Dorsolateral prefrontal cortex (tissue), 120 donors: ENCODE measurements at regions of chr3 and their contacts with region 1.

Region 1: DNA sequence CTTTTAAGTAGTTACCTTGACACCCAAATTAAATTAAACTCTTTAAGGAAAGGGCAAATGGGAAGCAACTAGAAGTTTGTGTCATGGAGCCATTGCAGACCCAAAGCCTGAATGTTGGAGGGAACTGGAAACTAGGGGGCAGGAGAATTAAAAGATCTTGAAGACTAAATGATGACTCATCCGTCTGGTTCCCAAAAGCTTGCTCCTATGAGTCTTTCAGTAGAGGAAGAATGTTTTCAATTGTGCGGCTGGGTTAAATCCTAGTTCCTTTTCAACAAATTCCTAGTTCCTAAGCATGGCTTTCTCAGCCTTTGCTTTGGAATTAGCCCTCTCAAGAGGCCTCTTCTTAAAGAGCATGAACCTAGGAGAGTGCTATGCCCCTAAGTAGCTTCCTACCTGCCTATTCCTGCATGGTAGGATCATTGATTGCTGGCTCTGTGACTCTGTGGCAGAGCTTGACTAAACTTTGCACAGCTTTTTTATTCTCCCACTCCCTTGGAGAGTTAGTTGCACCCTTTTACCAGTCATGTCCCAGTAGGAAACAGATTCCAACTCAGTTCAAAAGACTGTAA is 17.7 kb downstream of the CLEC3B start:
- DNase-seq: no peak
- H3K4me3 ChIP-seq: no peak overlapping the region
- H3K27ac ChIP-seq: no peak overlapping the region
- H3K27me3 ChIP-seq: peaks cover 0 to 5% (median 0%) of the 10 kb centered on the region in 45 donors
- CTCF ChIP-seq: peak in 11 of 56 donors; percentile 10 to 35 (median 17)

Region 2: GRCh38 chr3:44576613-44577012 is 467.2 kb before region 1 on chr3:
- intact Hi-C with region 1: no loop called
- DNase-seq: no peak
- H3K4me3 ChIP-seq: no peak overlapping the region
- H3K27ac ChIP-seq: no peak overlapping the region
- H3K27me3 ChIP-seq: no peaks in the 10 kb centered on the region
- CTCF ChIP-seq: no peak

Region 3: DNA sequence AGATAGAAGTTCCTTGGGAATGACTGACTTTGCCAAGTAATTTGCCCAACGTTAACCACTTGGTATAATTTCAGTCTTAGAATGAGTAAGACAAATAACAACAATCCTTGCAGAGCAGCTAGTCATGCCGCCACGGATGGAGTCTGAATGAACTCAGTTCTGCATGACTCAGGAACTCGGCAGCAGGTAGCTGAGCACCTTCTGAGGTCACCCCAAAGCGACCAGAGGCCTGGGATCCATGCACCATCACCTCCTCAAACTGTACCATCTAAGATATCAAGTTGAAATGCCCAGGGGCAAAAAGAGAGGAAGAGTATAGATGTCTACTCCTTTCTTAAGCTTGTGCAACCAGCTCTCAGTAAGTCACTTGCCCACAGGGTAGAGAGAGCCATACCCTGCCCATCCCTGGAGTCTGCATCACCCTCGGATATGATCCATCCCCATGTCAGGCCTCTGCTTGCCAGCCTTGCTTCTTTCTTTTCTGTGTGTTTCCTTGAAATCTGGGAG is 110.9 kb after region 1 on chr3:
- intact Hi-C with region 1: no loop called
- DNase-seq: no peak
- H3K4me3 ChIP-seq: no peak overlapping the region
- H3K27ac ChIP-seq: no peak overlapping the region
- H3K27me3 ChIP-seq: no peaks in the 10 kb centered on the region
- CTCF ChIP-seq: no peak

Region 4: DNA sequence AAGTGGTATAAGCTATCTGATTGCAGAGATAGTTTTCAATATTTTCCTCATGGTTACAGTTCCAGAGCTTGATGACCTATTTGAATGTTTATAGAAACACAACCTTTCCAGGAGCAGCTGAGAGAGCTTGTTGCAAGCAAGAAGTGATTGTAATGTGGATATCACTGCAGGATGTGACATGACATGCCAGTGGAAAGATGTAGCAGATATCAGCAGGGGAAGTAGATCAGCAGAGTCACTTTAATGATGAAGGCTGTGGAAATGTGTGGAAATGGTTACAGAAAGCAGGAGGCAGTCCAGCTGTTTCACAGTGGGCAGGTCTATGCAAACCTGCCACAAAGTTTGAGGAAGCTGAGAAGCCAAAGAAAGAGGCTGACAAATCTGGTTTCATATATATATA is 161.3 kb after region 1 on chr3:
- intact Hi-C with region 1: loop called (anchors 5 kb)
- DNase-seq: no peak
- H3K4me3 ChIP-seq: no peak overlapping the region
- H3K27ac ChIP-seq: no peak overlapping the region
- H3K27me3 ChIP-seq: peaks cover 0 to 4% (median 0%) of the 10 kb centered on the region in 45 donors
- CTCF ChIP-seq: no peak

Region 5: DNA sequence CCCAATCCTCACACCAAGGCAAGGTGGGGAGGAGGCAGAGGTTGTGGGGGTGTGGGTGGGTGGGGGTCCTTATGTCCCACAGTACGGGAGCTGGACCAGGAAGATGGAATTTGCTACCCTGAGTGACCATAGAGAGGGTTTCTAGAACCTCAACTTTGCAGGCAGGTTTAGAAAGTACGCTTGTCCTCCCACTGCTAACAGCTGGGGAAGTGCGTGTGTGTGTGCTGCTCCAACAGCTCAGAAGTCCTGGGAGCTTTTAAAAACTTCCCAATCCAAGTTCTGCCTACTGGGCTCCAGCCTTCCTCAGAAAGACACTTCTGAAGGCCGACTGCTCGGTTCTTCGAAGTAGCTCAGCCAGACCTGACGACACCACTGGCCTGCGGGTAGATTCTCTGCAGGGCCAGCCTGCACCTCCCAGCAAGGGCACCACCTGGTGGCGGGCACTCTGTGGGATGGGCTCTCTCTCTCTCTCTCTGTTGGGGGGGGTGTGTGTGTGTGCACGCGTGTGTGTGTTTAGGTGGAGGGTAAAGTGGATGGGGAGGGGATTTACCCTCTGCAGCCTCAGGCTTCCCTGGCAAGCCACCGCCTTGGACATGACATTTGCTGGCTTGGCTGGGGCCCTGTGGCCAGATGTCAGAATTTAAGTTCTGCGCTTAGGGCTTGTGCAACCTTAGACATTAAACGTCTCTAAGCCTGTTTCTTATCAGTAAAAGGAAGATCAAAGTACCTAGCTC is 166.7 kb after region 1 on chr3:
- intact Hi-C with region 1: loop called (anchors 5 kb)
- DNase-seq: peak in 7 of 10 donors; percentile 12 to 66 (median 60)
- H3K4me3 ChIP-seq: no peak overlapping the region
- H3K27ac ChIP-seq: no peak overlapping the region
- H3K27me3 ChIP-seq: peaks cover 0 to 12% (median 0%) of the 10 kb centered on the region in 45 donors
- CTCF ChIP-seq: peak in 54 of 56 donors; percentile 29 to 74 (median 54)

Region 6: DNA sequence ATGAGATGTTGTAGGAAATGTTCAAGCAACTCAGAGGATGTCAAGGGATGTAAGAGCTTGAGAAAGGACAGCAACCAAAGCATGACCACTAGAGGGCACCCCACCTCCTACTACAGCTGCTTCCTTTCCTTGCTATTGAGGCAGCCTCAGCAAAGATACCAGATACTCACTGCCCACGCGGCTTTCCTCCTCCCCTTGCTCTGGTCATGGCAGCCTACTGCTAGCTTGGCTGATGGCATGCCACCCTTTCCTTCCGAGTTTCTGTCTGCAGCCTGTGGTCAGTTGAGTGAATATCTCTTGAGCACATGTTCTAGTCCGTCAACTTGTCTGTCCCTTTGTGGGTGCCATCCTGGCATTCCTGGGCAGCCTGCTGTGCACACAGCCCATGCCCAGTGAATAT is 895.0 kb after region 1 on chr3:
- intact Hi-C with region 1: loop called in 1 of 2 experiments (anchors 5 kb)
- DNase-seq: peak; percentile 70 to 97 (median 88)
- H3K4me3 ChIP-seq: no peak overlapping the region
- H3K27ac ChIP-seq: peak overlapping the region in 41 of 59 donors; percentile 3 to 85 (median 51)
- H3K27me3 ChIP-seq: no peaks in the 10 kb centered on the region
- CTCF ChIP-seq: peak; percentile 77 to 98 (median 92)